Caco-2 (cell line): ENCODE measurements at regions of chr11 and their contacts with region 1.

Region 1: DNA sequence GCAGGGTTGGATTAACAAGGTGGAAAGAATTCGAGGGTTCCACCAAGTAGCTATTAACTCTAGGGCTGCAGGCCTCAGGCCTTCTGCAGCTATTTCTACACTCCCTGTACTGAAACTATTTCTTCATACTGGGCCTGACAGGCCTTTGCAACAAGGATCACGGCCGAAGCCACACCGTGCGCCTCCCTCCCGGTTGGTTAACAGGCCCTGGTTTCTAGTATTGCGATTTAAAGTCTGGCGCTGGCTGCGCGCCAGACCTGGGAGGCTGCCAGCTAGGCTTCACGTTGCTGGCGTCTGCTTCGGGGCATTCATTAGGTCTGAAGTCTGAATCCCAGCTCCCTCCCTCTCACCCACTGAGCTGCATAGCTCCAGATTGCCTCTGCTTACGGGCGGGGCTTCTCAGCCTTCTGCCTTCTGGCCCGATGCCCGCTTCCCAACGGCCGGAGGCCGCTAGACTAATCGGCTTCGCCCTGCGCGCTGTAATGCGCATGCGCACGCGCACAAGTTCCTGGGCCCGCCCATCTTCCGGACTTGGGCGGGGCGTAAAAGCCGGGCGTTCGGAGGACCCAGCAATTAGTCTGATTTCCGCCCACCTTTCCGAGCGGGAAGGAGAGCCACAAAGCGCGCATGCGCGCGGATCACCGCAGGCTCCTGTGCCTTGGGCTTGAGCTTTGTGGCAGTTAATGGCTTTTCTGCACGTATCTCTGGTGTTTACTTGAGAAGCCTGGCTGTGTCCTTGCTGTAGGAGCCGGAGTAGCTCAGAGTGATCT is 1.6 kb downstream of the LDHA start:
- DNase-seq: peak; percentile 97 to 98
- H3K4me3 ChIP-seq: peak overlapping the region; percentile 96
- H3K4me3 Mint-ChIP-seq: peak overlapping the region; percentile 98
- H3K27ac Mint-ChIP-seq: peak overlapping the region; percentile 98
- H3K4me1 ChIP-seq: no peaks in the 10 kb centered on the region; the same call in 1 of the 2 replicates
- H3K4me1 Mint-ChIP-seq: no peaks in the 10 kb centered on the region
- H3K27me3 ChIP-seq: no peaks in the 10 kb centered on the region
- H3K27me3 Mint-ChIP-seq: no peaks in the 10 kb centered on the region
- CTCF ChIP-seq: no peak

Region 2: GRCh38 chr11:18243783-18244362 is 152.0 kb before region 1 on chr11:
- CTCF ChIA-PET with region 1: interaction called, 4 read pairs
- POLR2A ChIA-PET with region 1: no interaction called
- intact Hi-C with region 1: loop called (anchors 10 kb)
- DNase-seq: peak; percentile 67 to 81
- H3K4me3 ChIP-seq: no peak overlapping the region
- H3K4me3 Mint-ChIP-seq: no peak overlapping the region
- H3K27ac Mint-ChIP-seq: no peak overlapping the region
- H3K4me1 ChIP-seq: no peaks in the 10 kb centered on the region
- H3K4me1 Mint-ChIP-seq: no peaks in the 10 kb centered on the region
- H3K27me3 ChIP-seq: no peaks in the 10 kb centered on the region
- H3K27me3 Mint-ChIP-seq: peaks cover 9% of the 10 kb centered on the region
- CTCF ChIP-seq: peak; percentile 85 to 89

Region 3: GRCh38 chr11:18321980-18322711 is 73.8 kb before region 1 on chr11 and contains the starts of genes GTF2H1 and HPS5:
- CTCF ChIA-PET with region 1: no interaction called
- POLR2A ChIA-PET with region 1: interaction called, 12 read pairs
- intact Hi-C with region 1: loop called (anchors 1 kb)
- DNase-seq: peak; percentile 96 to 99
- H3K4me3 ChIP-seq: peak within 1 kb of the TSS; percentile 87
- H3K4me3 Mint-ChIP-seq: peak within 1 kb of the TSS; percentile 84
- H3K27ac Mint-ChIP-seq: peak within 1 kb of the TSS; percentile 100
- H3K4me1 ChIP-seq: peaks cover 19% of the 10 kb centered on the region
- H3K4me1 Mint-ChIP-seq: peaks cover 30% of the 10 kb centered on the region
- H3K27me3 ChIP-seq: no peaks in the 10 kb centered on the region
- H3K27me3 Mint-ChIP-seq: no peaks in the 10 kb centered on the region
- CTCF ChIP-seq: peak in 1 of 2 experiments; percentile 1
- total RNA-seq, gene GTF2H1: 63.0 and 72.0 TPM in 2 replicates
- total RNA-seq, gene HPS5: 17.5 TPM in 2 replicates

Region 4: DNA sequence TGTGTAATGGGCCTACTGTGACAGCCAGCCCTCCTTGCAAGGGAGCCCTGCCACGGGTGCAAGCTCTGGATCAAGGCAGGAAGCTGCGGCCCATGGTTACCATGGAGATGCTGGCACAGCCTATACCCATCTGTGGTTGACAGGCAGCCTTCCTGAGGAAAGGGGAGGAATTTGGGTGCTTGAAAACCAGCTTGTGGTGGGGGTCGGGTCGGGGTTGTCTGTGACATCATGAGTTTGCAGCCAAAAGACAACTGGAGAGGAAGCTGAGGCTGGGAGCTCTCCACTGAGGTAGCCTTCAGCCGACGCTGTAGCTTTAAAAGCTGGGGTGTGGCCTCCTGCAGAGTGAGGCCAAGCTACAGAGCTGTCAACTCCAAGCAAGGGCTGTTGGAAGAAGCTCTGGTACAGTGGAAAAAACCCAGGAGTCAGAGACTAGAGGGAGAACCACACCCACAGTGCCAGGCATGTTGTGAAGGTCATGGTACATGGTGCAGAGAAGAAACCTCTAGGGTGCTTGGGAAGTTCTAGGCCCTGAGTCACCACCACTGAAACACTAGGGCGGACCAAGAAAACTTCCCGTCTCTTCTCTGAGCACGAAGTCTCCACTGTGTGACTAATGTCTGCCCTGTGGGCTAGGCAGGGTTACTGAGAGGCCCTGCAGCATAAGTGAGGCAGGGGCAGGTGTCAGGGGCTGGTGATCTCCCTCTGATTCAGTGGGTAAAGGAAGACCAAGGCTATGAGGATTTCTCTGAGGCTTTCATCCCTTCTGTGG is 12.3 kb before region 1 on chr11:
- CTCF ChIA-PET with region 1: interaction called, 16 read pairs
- POLR2A ChIA-PET with region 1: interaction called, 57 read pairs
- intact Hi-C with region 1: loop called (anchors 1 kb)
- DNase-seq: peak; percentile 54 to 81
- H3K4me3 ChIP-seq: no peak overlapping the region
- H3K4me3 Mint-ChIP-seq: peak overlapping the region; percentile 48
- H3K27ac Mint-ChIP-seq: peak overlapping the region; percentile 90
- H3K4me1 ChIP-seq: peaks cover 21% of the 10 kb centered on the region
- H3K4me1 Mint-ChIP-seq: peaks cover 17% of the 10 kb centered on the region
- H3K27me3 ChIP-seq: no peaks in the 10 kb centered on the region
- H3K27me3 Mint-ChIP-seq: no peaks in the 10 kb centered on the region
- CTCF ChIP-seq: no peak

Region 5: DNA sequence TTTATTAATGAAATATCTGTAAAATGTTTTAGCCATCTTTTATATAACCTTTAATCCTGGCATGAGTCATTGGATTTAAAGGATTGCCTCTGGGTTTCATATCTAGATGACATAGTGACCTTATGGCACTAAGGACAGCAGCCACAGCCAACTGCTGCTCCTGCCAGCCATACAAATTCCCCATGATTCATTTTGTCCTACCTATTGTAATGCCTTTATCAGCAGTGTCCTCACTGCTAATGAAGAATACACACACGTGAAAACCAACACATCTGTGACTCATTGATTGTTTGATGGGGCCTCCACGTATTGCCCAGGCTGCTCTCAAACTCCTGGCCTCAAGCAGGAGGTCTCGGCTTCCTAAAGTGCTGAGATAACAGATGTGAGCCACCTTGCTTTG is 61.5 kb after region 1 on chr11:
- CTCF ChIA-PET with region 1: no interaction called
- POLR2A ChIA-PET with region 1: no interaction called
- intact Hi-C with region 1: loop called (anchors 2 kb)
- DNase-seq: peak; percentile 47 to 66
- H3K4me3 ChIP-seq: no peak overlapping the region
- H3K4me3 Mint-ChIP-seq: no peak overlapping the region
- H3K27ac Mint-ChIP-seq: no peak overlapping the region
- H3K4me1 ChIP-seq: peaks cover 33% of the 10 kb centered on the region
- H3K4me1 Mint-ChIP-seq: peaks cover 27% of the 10 kb centered on the region
- H3K27me3 ChIP-seq: no peaks in the 10 kb centered on the region
- H3K27me3 Mint-ChIP-seq: no peaks in the 10 kb centered on the region
- CTCF ChIP-seq: no peak

Region 6: GRCh38 chr11:18615628-18616392 is 219.9 kb after region 1 on chr11:
- CTCF ChIA-PET with region 1: no interaction called
- POLR2A ChIA-PET with region 1: no interaction called
- intact Hi-C with region 1: no loop called
- DNase-seq: no peak
- H3K4me3 ChIP-seq: no peak overlapping the region
- H3K4me3 Mint-ChIP-seq: no peak overlapping the region
- H3K27ac Mint-ChIP-seq: no peak overlapping the region
- H3K4me1 ChIP-seq: peaks cover 7% of the 10 kb centered on the region; the same call in 1 of the 2 replicates
- H3K4me1 Mint-ChIP-seq: no peaks in the 10 kb centered on the region
- H3K27me3 ChIP-seq: no peaks in the 10 kb centered on the region
- H3K27me3 Mint-ChIP-seq: no peaks in the 10 kb centered on the region
- CTCF ChIP-seq: no peak